Left ventricle myocardium inferior (tissue), 1 donor: ENCODE measurements at regions of chr19 and their contacts with region 1.

Region 1: GRCh38 chr19:33430674-33431277 is 57.3 kb downstream of the CEBPG start:
- DNase-seq: peak; percentile 59
- H3K4me3 ChIP-seq: no peak overlapping the region
- H3K27ac ChIP-seq: no peak overlapping the region
- H3K4me1 ChIP-seq: no peaks in the 10 kb centered on the region
- H3K27me3 ChIP-seq: no peaks in the 10 kb centered on the region
- CTCF ChIP-seq: peak; percentile 82

Region 2: DNA sequence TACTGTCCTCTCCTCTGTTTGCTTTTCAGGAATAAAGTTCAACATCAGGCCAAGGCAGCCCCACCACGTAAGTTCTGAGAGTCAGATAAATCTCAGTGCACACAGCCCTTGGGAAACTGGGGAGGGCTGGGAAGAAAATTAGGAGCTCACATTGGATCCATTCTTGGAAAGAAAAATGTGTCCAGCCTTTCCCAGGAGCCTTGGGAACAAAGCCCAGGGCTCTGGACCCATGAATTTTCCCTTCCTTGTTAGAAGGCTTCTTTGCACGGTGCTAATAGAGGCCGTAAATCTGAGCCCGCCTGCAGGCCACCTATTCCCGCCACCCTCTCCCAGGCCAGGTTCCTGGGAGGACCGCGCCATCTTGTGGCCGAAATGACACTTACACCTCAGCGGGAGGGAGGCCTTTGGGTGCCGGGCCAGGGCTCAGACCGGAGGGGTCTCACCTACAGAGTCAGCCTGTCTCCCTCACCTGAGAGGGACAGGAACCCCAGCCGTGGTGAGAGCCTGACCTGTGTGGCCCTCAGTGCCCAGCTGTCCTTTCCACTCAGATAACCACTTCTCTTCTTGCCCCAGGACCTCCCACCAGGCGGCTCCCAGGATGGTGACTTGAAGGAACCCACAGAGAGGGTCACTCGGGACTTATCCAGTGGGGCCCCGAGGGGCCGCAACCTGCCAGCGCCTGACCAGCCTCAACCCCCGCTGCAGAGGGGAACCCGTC is 340.8 kb after region 1 on chr19:
- intact Hi-C with region 1: loop called (anchors 5 kb)
- DNase-seq: peak; percentile 67
- H3K4me3 ChIP-seq: no peak overlapping the region
- H3K27ac ChIP-seq: no peak overlapping the region
- H3K4me1 ChIP-seq: no peaks in the 10 kb centered on the region
- H3K27me3 ChIP-seq: peaks cover 96% of the 10 kb centered on the region
- CTCF ChIP-seq: peak; percentile 88